ENCODE measurements at regions of chr3 and their contacts with region 1.

Region 1: GRCh38 chr3:63975723-63976122 is 47.6 kb downstream of the PSMD6 start:
- DNase-seq: no peak
- ATAC-seq: no peak
- H3K4me3 Mint-ChIP-seq: no peak overlapping the region
- H3K27ac Mint-ChIP-seq: peak overlapping the region; percentile 30
- H3K4me1 Mint-ChIP-seq: peaks cover 94% of the 10 kb centered on the region
- H3K27me3 Mint-ChIP-seq: no peaks in the 10 kb centered on the region

Region 2: GRCh38 chr3:63400246-63400860 is 575.4 kb before region 1 on chr3:
- CTCF ChIA-PET with region 1: no interaction called
- DNase-seq: no peak
- ATAC-seq: no peak
- H3K4me3 Mint-ChIP-seq: no peak overlapping the region
- H3K27ac Mint-ChIP-seq: no peak overlapping the region
- H3K4me1 Mint-ChIP-seq: no peaks in the 10 kb centered on the region
- H3K27me3 Mint-ChIP-seq: no peaks in the 10 kb centered on the region

Region 3: GRCh38 chr3:63961891-63962290 is 13.8 kb before region 1 on chr3:
- CTCF ChIA-PET with region 1: interaction called, 35 read pairs
- DNase-seq: no peak
- ATAC-seq: peak; percentile 82
- H3K4me3 Mint-ChIP-seq: no peak overlapping the region
- H3K27ac Mint-ChIP-seq: no peak overlapping the region
- H3K4me1 Mint-ChIP-seq: peaks cover 53% of the 10 kb centered on the region
- H3K27me3 Mint-ChIP-seq: no peaks in the 10 kb centered on the region

Measured in activated CD8-positive, alpha-beta memory T cell treated with anti-CD3 and anti-CD28 coated beads, Interleukin-2, amount 10 ng/mL, durations not matched to agents 7 days and 5 days (primary cell).